Right lobe of liver (tissue), 6 donors: ENCODE measurements at regions of chr15 and their contacts with region 1.

Region 1: GRCh38 chr15:39579487-39580116 is 1.3 kb upstream of the THBS1 start:
- DNase-seq: peak; percentile 63 to 84 (median 73)
- ATAC-seq: peak; percentile 52 to 71 (median 66)
- H3K4me3 ChIP-seq: peak overlapping the region; percentile 48 to 58 (median 53)
- H3K27ac ChIP-seq: peak overlapping the region; percentile 75 to 88 (median 79)
- H3K4me1 ChIP-seq: peaks cover 0 to 13% (median 0%) of the 10 kb centered on the region in 4 donors
- H3K27me3 ChIP-seq: no peaks in the 10 kb centered on the region
- CTCF ChIP-seq: no peak
- POLR2A ChIP-seq: no peak

Region 2: GRCh38 chr15:39125904-39126303 is 453.7 kb before region 1 on chr15:
- intact Hi-C with region 1: loop called in 1 of 2 experiments (anchors 10 kb)
- DNase-seq: peak in 2 of 3 donors; percentile 20 to 50
- ATAC-seq: peak; percentile 52 to 76 (median 76)
- H3K4me3 ChIP-seq: no peak overlapping the region
- H3K27ac ChIP-seq: no peak overlapping the region
- H3K4me1 ChIP-seq: peaks cover 0 to 16% (median 5%) of the 10 kb centered on the region in 4 donors
- H3K27me3 ChIP-seq: no peaks in the 10 kb centered on the region
- CTCF ChIP-seq: peak; percentile 58 to 69 (median 64)
- POLR2A ChIP-seq: no peak

Region 3: DNA sequence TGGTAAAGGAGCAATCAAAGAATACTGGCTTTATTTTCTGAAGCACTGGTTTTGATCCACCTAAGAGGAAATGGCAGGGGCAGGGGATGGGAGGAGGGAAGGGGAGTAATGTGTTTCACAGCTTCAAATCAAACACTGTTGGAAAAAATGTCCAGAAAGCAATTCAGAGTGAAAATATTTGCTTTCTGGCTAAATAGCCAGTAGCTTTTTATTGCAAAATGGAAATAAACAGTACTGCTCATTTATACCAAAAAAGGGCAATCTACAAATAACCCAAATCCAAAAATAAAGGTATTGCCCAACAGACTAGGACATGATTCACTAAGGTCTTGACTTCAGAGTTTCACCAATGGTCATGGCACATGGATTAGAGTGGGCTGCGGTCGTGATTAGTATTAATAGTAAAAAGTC is 278.0 kb before region 1 on chr15:
- intact Hi-C with region 1: loop called in 1 of 2 experiments (anchors 10 kb)
- DNase-seq: no peak
- ATAC-seq: peak; percentile 67 to 83 (median 74)
- H3K4me3 ChIP-seq: no peak overlapping the region
- H3K27ac ChIP-seq: peak overlapping the region in 1 of 3 donors; percentile 5
- H3K4me1 ChIP-seq: peaks cover 0 to 7% (median 0%) of the 10 kb centered on the region in 4 donors
- H3K27me3 ChIP-seq: no peaks in the 10 kb centered on the region
- CTCF ChIP-seq: no peak
- POLR2A ChIP-seq: no peak